CD4-positive, alpha-beta T cell (primary cell): ENCODE measurements at regions of chr15 and their contacts with region 1.

Region 1: GRCh38 chr15:78437762-78438302 is at the start of gene IREB2:
- DNase-seq: peak; percentile 93 to 99 (median 96)
- ATAC-seq: peak; percentile 91
- H3K4me3 ChIP-seq: peak within 1 kb of the TSS; percentile 61
- H3K4me3 Mint-ChIP-seq: peak within 1 kb of the TSS; percentile 94
- H3K27ac ChIP-seq: peak within 1 kb of the TSS; percentile 86 to 89
- H3K27ac Mint-ChIP-seq: peak within 1 kb of the TSS; percentile 97
- H3K4me1 ChIP-seq: peaks cover 34% of the 10 kb centered on the region
- H3K4me1 Mint-ChIP-seq: peaks cover 51% of the 10 kb centered on the region
- H3K27me3 ChIP-seq: no peaks in the 10 kb centered on the region
- H3K27me3 Mint-ChIP-seq: no peaks in the 10 kb centered on the region
- CTCF ChIP-seq: no peak
- total RNA-seq, gene IREB2: 84.3 to 89.0 TPM

Region 2: GRCh38 chr15:78149068-78149804 is 288.6 kb before region 1 on chr15 and contains the start of gene IDH3A:
- CTCF ChIA-PET with region 1: no interaction called
- POLR2A ChIA-PET with region 1: interaction called, 8 read pairs
- intact Hi-C with region 1: loop called in 1 of 2 experiments (anchors 5 kb)
- DNase-seq: peak; percentile 99 to 100 (median 100)
- ATAC-seq: peak; percentile 94
- H3K4me3 ChIP-seq: peak within 1 kb of the TSS; percentile 69
- H3K4me3 Mint-ChIP-seq: peak within 1 kb of the TSS; percentile 97
- H3K27ac ChIP-seq: peak within 1 kb of the TSS in 1 of 2 donors; percentile 29
- H3K27ac Mint-ChIP-seq: peak within 1 kb of the TSS; percentile 91
- H3K4me1 ChIP-seq: peaks cover 27% of the 10 kb centered on the region
- H3K4me1 Mint-ChIP-seq: peaks cover 45% of the 10 kb centered on the region
- H3K27me3 ChIP-seq: no peaks in the 10 kb centered on the region
- H3K27me3 Mint-ChIP-seq: no peaks in the 10 kb centered on the region
- CTCF ChIP-seq: no peak
- total RNA-seq, gene IDH3A: 47.5 to 47.6 TPM

Region 3: GRCh38 chr15:78422571-78423340 is 15.1 kb before region 1 on chr15:
- CTCF ChIA-PET with region 1: interaction called, 8 read pairs
- POLR2A ChIA-PET with region 1: interaction called, 18 read pairs
- intact Hi-C with region 1: no loop called
- DNase-seq: peak; percentile 43 to 80 (median 54)
- ATAC-seq: peak; percentile 86
- H3K4me3 ChIP-seq: no peak overlapping the region
- H3K4me3 Mint-ChIP-seq: no peak overlapping the region
- H3K27ac ChIP-seq: no peak overlapping the region
- H3K27ac Mint-ChIP-seq: no peak overlapping the region
- H3K4me1 ChIP-seq: peaks cover 7% of the 10 kb centered on the region
- H3K4me1 Mint-ChIP-seq: peaks cover 20% of the 10 kb centered on the region
- H3K27me3 ChIP-seq: peaks cover 0 to 2% of the 10 kb centered on the region in 2 experiments
- H3K27me3 Mint-ChIP-seq: peaks cover 9% of the 10 kb centered on the region
- CTCF ChIP-seq: peak; percentile 93

Region 4: DNA sequence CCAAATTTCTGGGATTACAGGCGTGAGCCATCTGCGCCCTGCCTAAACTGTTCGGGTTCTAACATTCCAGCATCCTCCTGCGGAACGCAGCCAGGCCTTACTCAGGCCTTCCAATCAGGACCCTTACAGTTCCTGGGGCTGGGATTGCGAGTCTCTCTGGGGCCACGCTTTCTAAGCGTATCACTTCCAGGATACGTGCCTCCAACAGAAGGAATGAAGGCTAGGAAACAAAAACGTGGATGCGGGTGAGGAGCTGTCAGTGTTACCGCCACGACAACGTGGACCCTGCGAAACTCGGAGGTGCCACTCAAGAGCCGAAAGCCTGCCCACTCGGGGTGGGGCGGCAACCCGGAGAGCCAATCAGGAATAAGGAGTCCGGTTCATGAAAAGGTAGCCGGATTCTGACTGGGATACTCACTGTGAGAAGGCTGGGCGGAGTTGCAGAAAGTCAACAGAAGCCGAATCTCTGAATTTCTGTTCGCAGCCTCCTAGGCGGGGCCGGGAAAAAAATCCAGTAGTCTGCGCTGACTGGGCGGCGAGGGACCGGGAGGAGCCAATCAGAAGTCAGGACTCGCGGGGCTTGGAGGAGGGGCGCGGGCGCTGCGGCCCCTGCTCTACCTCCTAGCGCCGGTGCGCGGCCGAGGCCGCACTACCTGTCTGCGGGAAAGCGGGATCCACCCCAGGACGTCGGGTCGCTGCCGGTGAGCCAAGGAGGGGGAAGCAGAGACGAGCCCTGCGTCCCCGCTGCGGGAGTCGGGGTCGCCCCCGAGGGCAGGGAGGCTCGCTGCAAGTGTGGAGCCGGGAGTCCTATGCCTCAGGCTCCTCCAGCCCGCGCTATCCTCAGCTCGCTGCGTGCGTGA is 69.4 kb after region 1 on chr15 and contains the start of gene HYKK:
- CTCF ChIA-PET with region 1: no interaction called
- POLR2A ChIA-PET with region 1: interaction called, 17 read pairs
- intact Hi-C with region 1: loop called in 1 of 2 experiments (anchors 2 kb)
- DNase-seq: peak; percentile 33 to 87 (median 70)
- ATAC-seq: peak; percentile 84
- H3K4me3 ChIP-seq: peak within 1 kb of the TSS; percentile 75
- H3K4me3 Mint-ChIP-seq: peak within 1 kb of the TSS; percentile 93
- H3K27ac ChIP-seq: no peak within 1 kb of the TSS
- H3K27ac Mint-ChIP-seq: peak within 1 kb of the TSS; percentile 69
- H3K4me1 ChIP-seq: peaks cover 23% of the 10 kb centered on the region
- H3K4me1 Mint-ChIP-seq: peaks cover 36% of the 10 kb centered on the region
- H3K27me3 ChIP-seq: no peaks in the 10 kb centered on the region
- H3K27me3 Mint-ChIP-seq: no peaks in the 10 kb centered on the region
- CTCF ChIP-seq: no peak
- total RNA-seq, gene HYKK: 1.8 to 2.3 TPM

Region 5: GRCh38 chr15:78872972-78873792 is 435.4 kb after region 1 on chr15:
- CTCF ChIA-PET with region 1: interaction called, 3 read pairs
- POLR2A ChIA-PET with region 1: interaction called, 7 read pairs
- intact Hi-C with region 1: loop called in 1 of 2 experiments (anchors 5 kb)
- DNase-seq: peak; percentile 77 to 97 (median 86)
- ATAC-seq: peak; percentile 70
- H3K4me3 ChIP-seq: peak overlapping the region; percentile 98
- H3K4me3 Mint-ChIP-seq: peak overlapping the region; percentile 100
- H3K27ac ChIP-seq: peak overlapping the region; percentile 100
- H3K27ac Mint-ChIP-seq: peak overlapping the region; percentile 100
- H3K4me1 ChIP-seq: peaks cover 35% of the 10 kb centered on the region
- H3K4me1 Mint-ChIP-seq: peaks cover 49% of the 10 kb centered on the region
- H3K27me3 ChIP-seq: no peaks in the 10 kb centered on the region
- H3K27me3 Mint-ChIP-seq: no peaks in the 10 kb centered on the region
- CTCF ChIP-seq: peak; percentile 64